PC-9 (cell line): ENCODE measurements at regions of chr9 and their contacts with region 1.

Region 1: GRCh38 chr9:21576331-21577189 is 94.4 kb upstream of the IFNE start:
- DNase-seq: peak; percentile 35 to 88
- H3K4me3 ChIP-seq: peak overlapping the region; percentile 52
- H3K27ac ChIP-seq: peak overlapping the region; percentile 98
- H3K4me1 ChIP-seq: peaks cover 28% of the 10 kb centered on the region
- H3K27me3 ChIP-seq: no peaks in the 10 kb centered on the region
- CTCF ChIP-seq: no peak

Region 2: GRCh38 chr9:21434202-21435014 is 142.2 kb before region 1 on chr9:
- CTCF ChIA-PET with region 1: no interaction called
- POLR2A ChIA-PET with region 1: no interaction called
- intact Hi-C with region 1: no loop called
- DNase-seq: peak in 1 of 2 experiments; percentile 26
- H3K4me3 ChIP-seq: no peak overlapping the region
- H3K27ac ChIP-seq: no peak overlapping the region
- H3K4me1 ChIP-seq: no peaks in the 10 kb centered on the region
- H3K27me3 ChIP-seq: no peaks in the 10 kb centered on the region
- CTCF ChIP-seq: peak; percentile 66

Region 3: DNA sequence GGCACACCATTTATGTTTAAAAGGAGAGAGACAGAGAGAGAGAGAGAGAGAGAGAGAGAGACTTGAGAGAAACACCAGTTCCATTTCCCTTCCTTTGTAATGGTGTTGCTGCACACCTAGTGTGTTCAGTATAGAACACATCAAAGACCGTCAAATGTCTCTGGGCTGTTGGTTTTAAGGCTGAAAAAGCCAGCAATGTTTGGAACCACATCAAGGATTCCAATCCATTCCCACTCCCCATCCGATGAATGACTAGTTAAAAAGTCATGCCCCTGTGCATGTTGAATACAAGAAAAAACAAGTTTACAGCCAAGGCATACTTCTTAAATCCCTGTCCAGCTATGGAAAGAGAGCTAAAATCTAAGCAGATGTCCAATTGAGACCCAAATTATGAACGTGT is 11.4 kb before region 1 on chr9:
- CTCF ChIA-PET with region 1: interaction called, 16 read pairs
- POLR2A ChIA-PET with region 1: no interaction called
- intact Hi-C with region 1: no loop called
- DNase-seq: no peak
- H3K4me3 ChIP-seq: no peak overlapping the region
- H3K27ac ChIP-seq: no peak overlapping the region
- H3K4me1 ChIP-seq: peaks cover 7% of the 10 kb centered on the region; the same call in 1 of the 2 replicates
- H3K27me3 ChIP-seq: no peaks in the 10 kb centered on the region
- CTCF ChIP-seq: no peak

Region 4: GRCh38 chr9:21591221-21592062 is 14.9 kb after region 1 on chr9:
- CTCF ChIA-PET with region 1: no interaction called
- POLR2A ChIA-PET with region 1: interaction called, 5 read pairs
- intact Hi-C with region 1: loop called (anchors 2 kb)
- DNase-seq: peak; percentile 80 to 88
- H3K4me3 ChIP-seq: peak overlapping the region; percentile 50
- H3K27ac ChIP-seq: peak overlapping the region; percentile 98
- H3K4me1 ChIP-seq: peaks cover 32% of the 10 kb centered on the region
- H3K27me3 ChIP-seq: no peaks in the 10 kb centered on the region
- CTCF ChIP-seq: no peak

Region 5: DNA sequence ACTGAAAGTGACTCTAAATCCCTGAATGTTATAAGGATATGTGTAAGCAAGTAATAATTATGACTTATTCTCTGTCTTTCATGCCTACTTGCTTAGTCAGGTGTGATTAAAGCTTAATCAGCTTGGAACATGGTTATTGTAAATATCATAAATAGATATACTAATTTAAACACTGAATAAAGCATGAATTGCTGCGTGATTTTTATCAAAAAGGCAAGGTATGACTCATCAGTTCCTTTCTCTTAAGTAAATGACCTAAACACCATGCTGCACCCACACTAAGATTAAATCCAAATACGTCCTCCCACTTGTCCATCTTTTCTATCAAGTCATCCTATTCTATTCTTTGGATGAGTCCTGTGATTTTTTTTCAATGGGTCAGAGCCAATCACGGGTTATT is 101.3 kb after region 1 on chr9:
- CTCF ChIA-PET with region 1: no interaction called
- POLR2A ChIA-PET with region 1: no interaction called
- intact Hi-C with region 1: loop called (anchors 5 kb)
- DNase-seq: peak in 1 of 2 experiments; percentile 74
- H3K4me3 ChIP-seq: peak overlapping the region; percentile 45; the same call in 1 of the 2 replicates
- H3K27ac ChIP-seq: peak overlapping the region; percentile 79
- H3K4me1 ChIP-seq: peaks cover 54% of the 10 kb centered on the region
- H3K27me3 ChIP-seq: no peaks in the 10 kb centered on the region
- CTCF ChIP-seq: no peak

Region 6: DNA sequence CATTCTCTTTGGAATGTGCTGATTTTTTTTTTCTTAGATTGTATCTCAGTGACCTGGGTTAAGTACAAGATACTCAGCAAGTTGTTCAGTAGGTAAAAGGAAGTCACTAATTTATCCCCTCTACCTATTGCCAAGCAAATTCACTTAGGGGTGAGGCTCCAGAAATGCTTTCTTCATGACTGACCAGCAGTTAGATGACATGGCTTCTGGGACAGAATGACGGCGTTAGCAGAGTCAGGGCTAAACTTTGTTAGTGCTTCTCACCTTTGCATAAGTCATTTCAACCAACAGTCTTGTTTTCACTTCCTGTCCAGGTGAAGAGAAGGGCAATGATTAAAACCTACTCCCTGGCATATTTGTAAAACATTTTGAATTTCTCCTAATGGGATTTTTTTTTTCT is 205.6 kb after region 1 on chr9:
- CTCF ChIA-PET with region 1: no interaction called
- POLR2A ChIA-PET with region 1: no interaction called
- intact Hi-C with region 1: loop called (anchors 1 kb)
- DNase-seq: peak; percentile 50 to 94
- H3K4me3 ChIP-seq: no peak overlapping the region
- H3K27ac ChIP-seq: peak overlapping the region; percentile 93
- H3K4me1 ChIP-seq: peaks cover 46% of the 10 kb centered on the region
- H3K27me3 ChIP-seq: no peaks in the 10 kb centered on the region
- CTCF ChIP-seq: no peak